ENCODE measurements at regions of chr12 and their contacts with region 1.

Region 1: GRCh38 chr12:109927622-109928021 is 27.5 kb downstream of the TCHP start:
- DNase-seq: no peak
- H3K4me3 ChIP-seq: no peak overlapping the region
- CTCF ChIP-seq: peak; percentile 75

Region 2: DNA sequence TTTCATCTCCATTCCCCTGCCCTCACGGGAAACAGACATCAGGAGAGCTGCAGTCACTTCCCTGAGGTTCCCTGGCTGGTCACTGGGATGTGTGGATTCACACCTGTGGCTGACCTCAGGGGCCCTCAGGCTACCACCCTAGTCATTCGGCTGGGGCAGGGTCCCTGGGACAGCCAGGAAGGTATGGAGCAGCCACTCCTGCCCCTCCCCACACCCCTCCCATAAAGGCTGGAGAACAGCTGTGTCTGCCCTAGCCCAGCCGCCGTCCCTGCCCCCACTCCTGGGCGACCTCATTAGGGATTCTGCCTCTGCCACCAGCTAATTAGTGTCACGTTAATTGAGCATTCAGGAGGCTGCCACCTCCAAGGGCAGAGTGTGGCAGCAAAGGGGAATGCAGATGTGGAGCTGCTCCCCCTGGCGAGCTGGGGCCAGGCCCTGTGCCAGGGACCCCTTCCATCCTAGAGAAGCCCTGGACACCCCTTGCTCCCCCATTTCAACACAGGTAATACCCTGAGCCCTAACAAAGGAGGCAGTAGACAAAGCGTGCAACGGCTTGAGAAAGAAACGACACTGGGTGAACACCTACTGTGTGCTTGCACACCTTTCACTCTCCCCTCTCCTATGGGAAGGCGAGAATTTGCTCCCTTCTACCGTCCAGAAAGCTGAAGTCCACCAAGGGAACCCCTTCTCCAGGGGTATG is 169.1 kb before region 1 on chr12:
- CTCF ChIA-PET with region 1: no interaction called
- POLR2A ChIA-PET with region 1: no interaction called
- DNase-seq: no peak
- H3K4me3 ChIP-seq: no peak overlapping the region
- CTCF ChIP-seq: no peak

Region 3: DNA sequence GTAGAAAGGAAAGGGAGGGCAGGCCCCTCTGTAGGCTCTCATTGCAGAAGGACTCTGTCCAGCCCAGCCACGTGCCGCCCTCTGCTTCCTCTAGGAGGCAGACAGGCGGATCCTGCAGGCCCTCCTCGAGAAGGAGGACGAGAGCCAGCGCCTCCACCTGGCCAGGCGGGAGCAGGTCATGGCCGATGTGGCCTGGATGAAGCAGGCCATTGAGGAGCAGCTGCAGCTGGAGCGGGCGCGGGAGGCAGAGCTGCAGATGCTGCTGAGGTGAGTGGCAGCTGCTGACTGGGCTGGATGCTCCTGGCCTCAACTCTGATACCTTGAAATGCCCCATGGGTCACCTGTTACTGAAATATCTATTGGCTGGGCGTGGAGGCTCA is 16.7 kb before region 1 on chr12:
- CTCF ChIA-PET with region 1: interaction called, 15 read pairs
- POLR2A ChIA-PET with region 1: no interaction called
- DNase-seq: no peak
- H3K4me3 ChIP-seq: no peak overlapping the region
- CTCF ChIP-seq: peak; percentile 48

Region 4: DNA sequence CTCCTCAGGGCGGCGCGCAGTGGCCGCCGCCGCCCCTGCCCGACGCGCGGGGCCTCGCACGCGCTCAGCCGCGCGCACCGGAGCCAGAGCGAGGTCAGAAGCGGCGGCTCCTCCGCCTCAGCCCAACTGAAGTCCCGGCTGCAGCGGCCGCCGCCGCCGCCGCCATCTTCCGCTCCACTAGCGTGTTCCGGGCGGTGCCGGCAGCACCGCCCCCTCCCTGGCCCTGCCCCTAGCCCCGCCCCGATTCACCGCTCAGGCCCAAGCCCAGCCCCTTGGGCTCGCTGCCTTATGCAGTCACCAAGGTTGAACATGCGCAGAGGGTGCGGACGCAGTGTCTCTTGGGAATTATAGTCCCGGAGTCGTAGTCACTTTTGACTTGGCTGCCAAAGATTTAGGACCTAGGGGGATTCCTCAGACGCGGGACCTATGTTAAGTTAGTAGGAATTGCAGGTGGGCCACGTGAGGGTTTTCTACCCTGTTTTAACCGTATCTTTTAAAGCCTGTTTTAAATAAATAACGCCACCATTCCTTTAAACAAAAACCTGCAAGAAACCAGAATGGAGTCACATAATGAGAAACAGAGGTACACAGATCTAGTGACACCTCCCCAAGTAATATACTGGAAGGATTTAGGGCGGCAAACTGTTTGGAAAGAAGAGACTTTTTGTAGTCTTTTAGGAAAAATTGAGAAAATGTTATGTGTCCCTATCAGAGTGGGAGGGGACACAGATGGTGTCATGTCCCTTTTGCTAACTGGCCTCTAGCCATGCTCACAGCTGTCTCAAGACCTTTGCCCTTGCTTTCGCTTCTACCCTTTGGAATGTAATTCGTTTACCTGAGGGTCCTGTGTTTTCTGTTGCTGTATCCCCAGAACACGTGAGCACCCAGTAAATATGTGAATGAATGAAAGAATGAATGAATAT is 655.8 kb after region 1 on chr12 and contains the start of gene PPTC7:
- CTCF ChIA-PET with region 1: no interaction called
- POLR2A ChIA-PET with region 1: no interaction called
- DNase-seq: peak; percentile 73
- H3K4me3 ChIP-seq: peak within 1 kb of the TSS; percentile 90
- CTCF ChIP-seq: no peak

Region 5: GRCh38 chr12:110639336-110640141 is 711.9 kb after region 1 on chr12:
- CTCF ChIA-PET with region 1: no interaction called
- POLR2A ChIA-PET with region 1: no interaction called
- DNase-seq: peak; percentile 23
- H3K4me3 ChIP-seq: no peak overlapping the region
- CTCF ChIP-seq: no peak

Measured in AG04449 (cell line).